CD8-positive, alpha-beta memory T cell (primary cell): ENCODE measurements at regions of chr17 and their contacts with region 1.

Region 1: DNA sequence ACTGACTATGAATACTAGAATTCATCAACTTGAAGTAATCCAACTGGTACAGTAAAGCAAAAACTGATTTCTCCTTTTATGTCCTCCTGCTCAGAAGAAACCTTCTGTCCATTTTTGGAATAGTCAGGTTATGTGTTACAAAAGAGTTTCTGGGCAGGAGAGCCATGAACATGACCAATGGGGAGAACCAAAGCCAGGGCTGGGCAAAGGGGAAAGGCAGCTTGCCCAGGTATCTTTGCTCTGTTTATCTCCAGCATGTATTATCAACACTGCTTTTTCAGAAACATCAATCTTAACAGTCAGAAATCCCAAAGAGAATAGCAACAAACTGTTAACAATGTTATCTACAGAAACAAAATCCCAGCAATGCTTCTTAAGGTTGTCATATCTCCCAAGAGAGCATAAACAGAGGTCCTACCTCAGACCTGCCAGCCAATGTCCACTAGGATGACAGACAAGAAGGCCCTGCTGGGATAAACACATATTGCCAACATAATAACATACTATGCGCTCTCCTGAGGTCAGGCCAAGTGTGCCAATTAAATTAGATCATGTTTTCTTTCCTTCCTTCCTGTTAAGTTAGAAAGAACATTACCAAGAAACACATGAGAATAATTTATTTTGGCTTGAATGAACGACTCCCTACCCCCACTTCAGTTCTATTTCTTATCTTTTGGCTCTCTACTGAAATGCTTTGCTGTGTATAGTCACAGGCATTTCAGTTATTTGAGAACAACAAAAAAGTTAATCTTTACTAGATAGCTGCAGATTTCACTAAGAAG is 28.0 kb downstream of the BLMH start:
- DNase-seq: no peak
- H3K4me3 ChIP-seq: no peak overlapping the region
- H3K4me3 Mint-ChIP-seq: no peak overlapping the region
- H3K27ac ChIP-seq: no peak overlapping the region
- H3K27ac Mint-ChIP-seq: peak overlapping the region in 2 of 8 donors; percentile 22 to 52
- H3K4me1 ChIP-seq: no peaks in the 10 kb centered on the region
- H3K4me1 Mint-ChIP-seq: peaks cover 4 to 14% (median 5%) of the 10 kb centered on the region in 3 donors
- H3K27me3 ChIP-seq: no peaks in the 10 kb centered on the region
- H3K27me3 Mint-ChIP-seq: no peaks in the 10 kb centered on the region

Region 2: DNA sequence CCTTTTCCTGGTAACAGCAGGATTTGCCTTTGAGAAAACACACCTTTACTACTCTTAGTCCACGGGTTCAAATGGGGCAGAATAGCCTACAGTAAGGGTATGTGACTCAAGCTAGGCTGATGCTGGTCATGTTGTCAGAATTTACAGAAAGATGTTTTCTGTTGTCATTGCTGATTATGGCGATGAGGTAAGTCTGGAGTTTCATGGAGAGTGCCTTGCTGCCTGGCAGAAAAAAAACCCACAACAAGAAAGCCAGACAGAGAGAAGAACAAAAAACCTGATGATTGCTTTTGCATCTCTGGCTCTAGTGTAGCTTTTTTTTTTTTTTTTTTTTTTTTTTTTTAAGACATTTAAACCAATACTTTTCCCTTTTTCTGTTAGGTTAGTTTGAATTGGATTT is 76.2 kb before region 1 on chr17:
- CTCF ChIA-PET with region 1: no interaction called
- POLR2A ChIA-PET with region 1: interaction called, 10 read pairs
- DNase-seq: no peak
- H3K4me3 ChIP-seq: no peak overlapping the region
- H3K4me3 Mint-ChIP-seq: no peak overlapping the region
- H3K27ac ChIP-seq: no peak overlapping the region
- H3K27ac Mint-ChIP-seq: peak overlapping the region in 3 of 8 donors; percentile 38 to 54 (median 40)
- H3K4me1 ChIP-seq: no peaks in the 10 kb centered on the region
- H3K4me1 Mint-ChIP-seq: no peaks in the 10 kb centered on the region
- H3K27me3 ChIP-seq: no peaks in the 10 kb centered on the region
- H3K27me3 Mint-ChIP-seq: no peaks in the 10 kb centered on the region

Region 3: GRCh38 chr17:30248786-30249185 is 15.0 kb before region 1 on chr17:
- CTCF ChIA-PET with region 1: no interaction called
- POLR2A ChIA-PET with region 1: no interaction called
- DNase-seq: no peak
- H3K4me3 ChIP-seq: no peak overlapping the region
- H3K4me3 Mint-ChIP-seq: no peak overlapping the region
- H3K27ac ChIP-seq: no peak overlapping the region
- H3K27ac Mint-ChIP-seq: peak overlapping the region in 2 of 8 donors; percentile 15 to 24
- H3K4me1 ChIP-seq: no peaks in the 10 kb centered on the region
- H3K4me1 Mint-ChIP-seq: peaks cover 0 to 3% (median 0%) of the 10 kb centered on the region in 3 donors
- H3K27me3 ChIP-seq: no peaks in the 10 kb centered on the region
- H3K27me3 Mint-ChIP-seq: no peaks in the 10 kb centered on the region